Heart left ventricle (tissue), 16 donors: ENCODE measurements at regions of chr15 and their contacts with region 1.

Region 1: DNA sequence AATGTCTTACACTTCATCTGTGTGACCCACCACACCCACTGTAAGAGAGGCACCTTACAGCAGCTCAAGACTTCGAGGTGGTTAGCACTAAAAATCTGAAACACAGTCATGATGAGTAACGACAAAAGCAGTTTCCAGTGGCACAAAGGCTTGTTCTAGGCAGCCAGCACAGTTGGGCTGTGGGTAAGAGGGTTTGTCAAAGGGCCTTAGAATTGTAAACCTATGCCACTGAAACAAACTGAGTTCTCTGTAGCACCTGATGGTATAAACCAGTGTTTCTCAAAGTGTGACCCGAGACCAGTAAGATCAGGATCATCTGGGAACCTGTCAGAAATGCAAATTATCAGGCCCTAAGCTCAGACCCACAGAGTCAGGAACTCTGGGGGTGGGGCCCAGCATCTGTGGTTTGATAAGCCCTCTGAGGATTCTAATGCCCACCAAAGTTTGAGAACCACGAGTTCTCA is 36.5 kb downstream of the DAPK2 start:
- DNase-seq: peak in 1 of 5 donors; percentile 2
- ATAC-seq: peak in 1 of 4 donors; percentile 4
- H3K4me3 ChIP-seq: no peak overlapping the region
- H3K27ac ChIP-seq: peak overlapping the region in 11 of 12 donors; percentile 24 to 79 (median 65)
- H3K4me1 ChIP-seq: peaks cover 5 to 71% (median 40%) of the 10 kb centered on the region in 12 donors
- H3K27me3 ChIP-seq: no peaks in the 10 kb centered on the region
- CTCF ChIP-seq: no peak
- POLR2A ChIP-seq: no peak

Region 2: GRCh38 chr15:63986751-63987341 is 23.0 kb before region 1 on chr15:
- intact Hi-C with region 1: loop called in 2 of 10 experiments (anchors 2 to 5 kb)
- DNase-seq: no peak
- ATAC-seq: no peak
- H3K4me3 ChIP-seq: no peak overlapping the region
- H3K27ac ChIP-seq: peak overlapping the region; percentile 73 to 97 (median 87)
- H3K4me1 ChIP-seq: peaks cover 11 to 81% (median 67%) of the 10 kb centered on the region in 12 donors
- H3K27me3 ChIP-seq: no peaks in the 10 kb centered on the region
- CTCF ChIP-seq: no peak
- POLR2A ChIP-seq: no peak

Region 3: GRCh38 chr15:64050281-64051092 is 40.7 kb after region 1 on chr15:
- intact Hi-C with region 1: no loop called
- DNase-seq: no peak
- ATAC-seq: no peak
- H3K4me3 ChIP-seq: no peak overlapping the region
- H3K27ac ChIP-seq: no peak overlapping the region
- H3K4me1 ChIP-seq: peaks cover 0 to 48% (median 7%) of the 10 kb centered on the region in 12 donors
- H3K27me3 ChIP-seq: no peaks in the 10 kb centered on the region
- CTCF ChIP-seq: no peak
- POLR2A ChIP-seq: no peak